Endothelial cell of umbilical vein (primary cell): ENCODE measurements at regions of chr20 and their contacts with region 1.

Region 1: DNA sequence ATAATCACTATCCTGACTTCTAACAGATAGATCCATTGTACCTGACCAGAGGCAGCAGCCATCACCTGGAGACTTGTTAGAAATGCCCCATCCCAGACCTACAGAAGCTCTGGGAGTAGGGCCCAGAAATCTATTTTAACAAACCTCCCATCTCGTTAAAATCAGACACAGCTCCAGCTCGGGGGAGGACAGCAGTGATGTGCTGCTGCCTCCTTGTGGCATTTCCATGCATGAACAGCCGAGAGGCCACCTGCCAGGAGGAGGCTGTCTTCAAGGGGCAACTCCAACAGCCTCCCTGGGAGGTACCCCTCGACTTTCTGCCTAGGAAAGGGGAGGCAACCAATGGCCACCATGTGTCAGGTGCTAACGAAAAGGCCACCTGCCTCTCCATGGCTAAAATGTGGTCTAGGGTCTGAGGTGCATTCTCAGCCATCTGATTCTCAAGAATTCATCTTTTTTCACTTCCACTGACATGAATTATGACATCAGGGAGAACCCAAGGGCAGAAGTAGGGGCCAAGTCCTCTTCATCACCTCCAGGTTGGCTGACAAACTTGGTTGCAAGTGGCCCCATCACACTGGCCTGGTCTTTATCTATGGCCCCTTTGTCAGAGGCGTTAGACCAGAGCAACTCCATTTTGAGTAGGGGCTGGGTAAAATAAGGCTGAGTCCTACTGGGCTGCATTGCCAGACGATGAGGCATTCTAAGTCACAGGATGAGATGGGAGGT is 12.2 kb upstream of the KCNK15 start:
- DNase-seq: peak; percentile 74
- H3K4me3 ChIP-seq: no peak overlapping the region
- H3K27ac ChIP-seq: no peak overlapping the region
- H3K4me1 ChIP-seq: peaks cover 12% of the 10 kb centered on the region
- H3K27me3 ChIP-seq: no peaks in the 10 kb centered on the region
- CTCF ChIP-seq: peak; percentile 84 to 92
- POLR2A ChIP-seq: no peak

Region 2: GRCh38 chr20:44475694-44476560 is 257.6 kb before region 1 on chr20 and contains the start of gene TTPAL:
- CTCF ChIA-PET with region 1: no interaction called
- POLR2A ChIA-PET with region 1: no interaction called
- dilution Hi-C with region 1: no loop called
- intact Hi-C with region 1: loop called (anchors 10 kb)
- DNase-seq: peak; percentile 83
- H3K4me3 ChIP-seq: peak within 1 kb of the TSS; percentile 42 to 68 (median 52)
- H3K27ac ChIP-seq: peak within 1 kb of the TSS; percentile 56
- H3K4me1 ChIP-seq: peaks cover 13% of the 10 kb centered on the region
- H3K27me3 ChIP-seq: peaks cover 0 to 4% of the 10 kb centered on the region in 2 experiments
- CTCF ChIP-seq: peak; percentile 4 to 28
- POLR2A ChIP-seq: peak; percentile 91
- total RNA-seq, gene TTPAL: 8.0 and 8.7 TPM in 2 replicates

Region 3: GRCh38 chr20:44576297-44576696 is 157.2 kb before region 1 on chr20:
- CTCF ChIA-PET with region 1: interaction called, 3 read pairs
- POLR2A ChIA-PET with region 1: no interaction called
- dilution Hi-C with region 1: no loop called
- intact Hi-C with region 1: loop called (anchors 1 kb)
- DNase-seq: peak; percentile 76
- H3K4me3 ChIP-seq: no peak overlapping the region
- H3K27ac ChIP-seq: peak overlapping the region; percentile 61
- H3K4me1 ChIP-seq: peaks cover 53% of the 10 kb centered on the region
- H3K27me3 ChIP-seq: no peaks in the 10 kb centered on the region
- CTCF ChIP-seq: peak; percentile 35 to 51
- POLR2A ChIP-seq: no peak

Region 4: GRCh38 chr20:44692932-44693476 is 40.5 kb before region 1 on chr20:
- CTCF ChIA-PET with region 1: interaction called, 30 read pairs
- POLR2A ChIA-PET with region 1: no interaction called
- dilution Hi-C with region 1: no loop called
- intact Hi-C with region 1: loop called (anchors 1 kb)
- DNase-seq: peak; percentile 98
- H3K4me3 ChIP-seq: no peak overlapping the region
- H3K27ac ChIP-seq: peak overlapping the region; percentile 93
- H3K4me1 ChIP-seq: peaks cover 33% of the 10 kb centered on the region
- H3K27me3 ChIP-seq: no peaks in the 10 kb centered on the region
- CTCF ChIP-seq: no peak
- POLR2A ChIP-seq: no peak

Region 5: DNA sequence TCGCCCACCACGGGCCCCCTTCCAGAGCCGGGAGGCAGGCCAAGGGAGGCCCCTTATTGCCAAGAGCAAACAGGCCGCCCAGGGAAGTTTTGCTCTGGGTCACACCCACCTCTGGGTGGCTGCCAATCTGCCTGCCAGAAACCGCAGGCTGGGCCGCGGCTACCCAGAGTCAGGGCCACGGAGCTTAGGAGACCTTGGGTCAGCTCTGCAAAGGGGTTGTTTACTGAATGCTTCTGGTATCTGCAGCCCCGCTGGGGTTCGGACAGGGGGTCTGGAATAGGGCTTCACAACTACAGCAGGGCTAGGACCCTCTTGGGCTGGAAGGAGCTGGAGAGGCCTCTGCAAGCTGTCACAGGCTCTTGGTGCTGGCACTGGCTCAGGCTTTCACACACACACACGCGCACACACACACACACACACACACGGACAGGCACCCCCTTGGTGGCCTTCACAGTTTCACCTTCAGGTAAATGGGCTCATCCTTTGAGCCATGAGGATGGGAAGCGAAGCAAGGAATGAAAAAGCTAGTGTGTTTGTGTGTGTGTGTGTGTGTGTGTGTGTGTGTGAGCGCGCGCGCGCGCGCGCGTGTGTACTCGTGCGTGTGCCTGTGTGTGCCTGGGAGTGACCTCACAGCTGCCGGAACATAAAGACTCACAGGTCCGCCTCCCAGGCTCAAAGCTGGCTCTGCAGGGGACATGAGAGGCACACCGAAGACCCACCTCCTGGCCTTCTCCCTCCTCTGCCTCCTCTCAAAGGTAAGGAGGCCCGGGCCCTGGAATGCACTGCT is 18.6 kb before region 1 on chr20 and contains the start of gene CCN5:
- CTCF ChIA-PET with region 1: interaction called, 23 read pairs
- POLR2A ChIA-PET with region 1: no interaction called
- dilution Hi-C with region 1: no loop called
- intact Hi-C with region 1: no loop called
- DNase-seq: peak; percentile 68
- H3K4me3 ChIP-seq: no peak within 1 kb of the TSS
- H3K27ac ChIP-seq: no peak within 1 kb of the TSS
- H3K4me1 ChIP-seq: peaks cover 7% of the 10 kb centered on the region
- H3K27me3 ChIP-seq: no peaks in the 10 kb centered on the region
- CTCF ChIP-seq: no peak
- POLR2A ChIP-seq: no peak
- total RNA-seq, gene CCN5: not detected in 2 replicates